ENCODE measurements at regions of chr12 and their contacts with region 1.

Region 1: GRCh38 chr12:47715393-47715876 is 9.6 kb upstream of the RPAP3 start:
- DNase-seq: peak; percentile 79 to 85 (median 81)
- ATAC-seq: peak; percentile 58 to 60
- H3K4me3 ChIP-seq: no peak overlapping the region
- H3K27ac ChIP-seq: peak overlapping the region; percentile 82
- H3K4me1 ChIP-seq: peaks cover 30% of the 10 kb centered on the region
- H3K27me3 ChIP-seq: no peaks in the 10 kb centered on the region

Region 2: GRCh38 chr12:47767216-47767724 is 51.8 kb after region 1 on chr12:
- intact Hi-C with region 1: loop called (anchors 2 to 5 kb)
- DNase-seq: peak in 2 of 3 donors; percentile 58
- ATAC-seq: peak in 1 of 2 donors; percentile 22
- H3K4me3 ChIP-seq: no peak overlapping the region
- H3K27ac ChIP-seq: no peak overlapping the region
- H3K4me1 ChIP-seq: no peaks in the 10 kb centered on the region
- H3K27me3 ChIP-seq: no peaks in the 10 kb centered on the region

Region 3: GRCh38 chr12:47773062-47773857 is 57.8 kb after region 1 on chr12 and contains the start of gene SLC48A1:
- intact Hi-C with region 1: loop called in 3 of 4 experiments (anchors 5 kb)
- DNase-seq: peak; percentile 80 to 92 (median 92)
- ATAC-seq: peak; percentile 67 to 83
- H3K4me3 ChIP-seq: peak within 1 kb of the TSS; percentile 84
- H3K27ac ChIP-seq: peak within 1 kb of the TSS; percentile 58
- H3K4me1 ChIP-seq: peaks cover 23% of the 10 kb centered on the region
- H3K27me3 ChIP-seq: no peaks in the 10 kb centered on the region
- total RNA-seq, gene SLC48A1: 26.5 to 30.1 (median 27.6) TPM

Measured in right cardiac atrium (tissue), 5 donors.